Naive thymus-derived CD4-positive, alpha-beta T cell (primary cell): ENCODE measurements at regions of chr10 and their contacts with region 1.

Region 1: GRCh38 chr10:129030996-129031843 is 435.8 kb upstream of the MGMT start:
- DNase-seq: peak; percentile 30 to 64 (median 56)
- ATAC-seq: peak; percentile 72
- H3K4me3 ChIP-seq: no peak overlapping the region
- H3K4me3 Mint-ChIP-seq: peak overlapping the region in 6 of 10 donors; percentile 46 to 74 (median 61)
- H3K27ac ChIP-seq: no peak overlapping the region
- H3K27ac Mint-ChIP-seq: peak overlapping the region in 3 of 9 donors; percentile 1 to 58 (median 13)
- H3K4me1 ChIP-seq: peaks cover 5 to 23% of the 10 kb centered on the region in 2 donors
- H3K4me1 Mint-ChIP-seq: peaks cover 11 to 48% (median 39%) of the 10 kb centered on the region in 7 donors
- H3K27me3 ChIP-seq: no peaks in the 10 kb centered on the region
- H3K27me3 Mint-ChIP-seq: peaks cover 15 to 44% (median 24%) of the 10 kb centered on the region in 5 donors

Region 2: DNA sequence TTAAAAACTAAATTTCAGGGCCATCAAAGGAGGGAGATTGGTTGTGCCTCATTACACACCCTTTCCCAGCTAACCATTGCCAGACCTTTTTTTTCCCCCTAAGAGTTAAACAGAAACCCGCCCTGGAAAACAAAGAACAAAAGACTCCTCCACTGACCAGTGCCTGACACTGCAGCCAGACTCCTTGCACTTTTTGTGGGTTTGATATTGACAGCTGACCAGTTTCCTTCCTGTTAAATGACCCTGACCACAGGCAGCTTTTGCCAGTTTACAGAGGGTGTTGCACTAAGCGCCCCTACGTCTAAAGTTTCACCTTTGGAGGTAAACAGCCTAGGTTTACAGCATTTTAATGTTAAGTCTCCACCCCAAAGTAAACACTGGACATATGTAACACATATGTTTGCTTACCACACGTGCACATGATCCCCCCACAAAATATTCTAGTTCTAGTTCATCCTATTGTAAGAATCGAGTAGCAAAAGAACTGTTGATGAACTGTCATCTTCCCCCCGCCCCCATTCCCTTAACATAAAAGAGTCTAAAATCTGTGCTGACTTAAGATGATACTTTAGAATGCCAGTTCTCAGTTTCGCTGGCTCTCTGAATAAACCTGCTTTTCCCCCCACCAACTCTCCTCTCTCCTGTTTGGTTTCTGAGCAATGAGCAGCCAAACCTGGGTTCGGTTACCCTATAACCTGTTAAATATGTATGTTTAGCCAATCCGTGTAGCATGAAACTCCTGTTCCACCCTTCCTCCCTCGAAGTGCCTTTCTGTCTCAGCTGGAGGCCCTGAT is 1256.3 kb before region 1 on chr10:
- CTCF ChIA-PET with region 1: no interaction called
- POLR2A ChIA-PET with region 1: no interaction called
- intact Hi-C with region 1: no loop called
- DNase-seq: no peak
- ATAC-seq: no peak
- H3K4me3 ChIP-seq: no peak overlapping the region
- H3K4me3 Mint-ChIP-seq: no peak overlapping the region
- H3K27ac ChIP-seq: no peak overlapping the region
- H3K27ac Mint-ChIP-seq: no peak overlapping the region
- H3K4me1 ChIP-seq: no peaks in the 10 kb centered on the region
- H3K4me1 Mint-ChIP-seq: no peaks in the 10 kb centered on the region
- H3K27me3 ChIP-seq: no peaks in the 10 kb centered on the region
- H3K27me3 Mint-ChIP-seq: peaks cover 0 to 11% (median 4%) of the 10 kb centered on the region in 5 donors

Region 3: GRCh38 chr10:129074939-129075338 is 43.7 kb after region 1 on chr10:
- CTCF ChIA-PET with region 1: interaction called, 3 read pairs
- POLR2A ChIA-PET with region 1: no interaction called
- intact Hi-C with region 1: loop called in 1 of 2 experiments (anchors 5 kb)
- DNase-seq: no peak
- ATAC-seq: no peak
- H3K4me3 ChIP-seq: no peak overlapping the region
- H3K4me3 Mint-ChIP-seq: no peak overlapping the region
- H3K27ac ChIP-seq: no peak overlapping the region
- H3K27ac Mint-ChIP-seq: no peak overlapping the region
- H3K4me1 ChIP-seq: peaks cover 0 to 7% of the 10 kb centered on the region in 2 donors
- H3K4me1 Mint-ChIP-seq: peaks cover 0 to 24% (median 13%) of the 10 kb centered on the region in 7 donors
- H3K27me3 ChIP-seq: no peaks in the 10 kb centered on the region
- H3K27me3 Mint-ChIP-seq: no peaks in the 10 kb centered on the region

Region 4: GRCh38 chr10:129161150-129161549 is 129.9 kb after region 1 on chr10:
- CTCF ChIA-PET with region 1: no interaction called
- POLR2A ChIA-PET with region 1: no interaction called
- intact Hi-C with region 1: loop called in 1 of 2 experiments (anchors 5 kb)
- DNase-seq: no peak
- ATAC-seq: no peak
- H3K4me3 ChIP-seq: no peak overlapping the region
- H3K4me3 Mint-ChIP-seq: no peak overlapping the region
- H3K27ac ChIP-seq: no peak overlapping the region
- H3K27ac Mint-ChIP-seq: no peak overlapping the region
- H3K4me1 ChIP-seq: no peaks in the 10 kb centered on the region
- H3K4me1 Mint-ChIP-seq: peaks cover 0 to 7% (median 0%) of the 10 kb centered on the region in 7 donors
- H3K27me3 ChIP-seq: no peaks in the 10 kb centered on the region
- H3K27me3 Mint-ChIP-seq: peaks cover 0 to 11% (median 4%) of the 10 kb centered on the region in 5 donors

Region 5: GRCh38 chr10:129888784-129889616 is 857.8 kb after region 1 on chr10:
- CTCF ChIA-PET with region 1: no interaction called
- POLR2A ChIA-PET with region 1: no interaction called
- intact Hi-C with region 1: loop called in 1 of 2 experiments (anchors 2 kb)
- DNase-seq: peak in 8 of 9 donors; percentile 4 to 34 (median 16)
- ATAC-seq: peak; percentile 50
- H3K4me3 ChIP-seq: no peak overlapping the region
- H3K4me3 Mint-ChIP-seq: no peak overlapping the region
- H3K27ac ChIP-seq: no peak overlapping the region
- H3K27ac Mint-ChIP-seq: no peak overlapping the region
- H3K4me1 ChIP-seq: no peaks in the 10 kb centered on the region
- H3K4me1 Mint-ChIP-seq: no peaks in the 10 kb centered on the region
- H3K27me3 ChIP-seq: no peaks in the 10 kb centered on the region
- H3K27me3 Mint-ChIP-seq: peaks cover 0 to 3% (median 0%) of the 10 kb centered on the region in 5 donors

Region 6: GRCh38 chr10:130110246-130111112 is 1079.3 kb after region 1 on chr10 and contains the start of gene C10orf143:
- CTCF ChIA-PET with region 1: interaction called, 5 read pairs
- POLR2A ChIA-PET with region 1: interaction called, 21 read pairs
- intact Hi-C with region 1: loop called in 1 of 2 experiments (anchors 1 kb)
- DNase-seq: peak; percentile 96 to 100 (median 99)
- ATAC-seq: peak; percentile 89
- H3K4me3 ChIP-seq: peak within 1 kb of the TSS; percentile 100
- H3K4me3 Mint-ChIP-seq: peak within 1 kb of the TSS; percentile 90 to 99 (median 98)
- H3K27ac ChIP-seq: peak within 1 kb of the TSS; percentile 88
- H3K27ac Mint-ChIP-seq: peak within 1 kb of the TSS; percentile 90 to 99 (median 98)
- H3K4me1 ChIP-seq: peaks cover 19 to 21% of the 10 kb centered on the region in 2 donors
- H3K4me1 Mint-ChIP-seq: peaks cover 27 to 67% (median 53%) of the 10 kb centered on the region in 7 donors
- H3K27me3 ChIP-seq: no peaks in the 10 kb centered on the region
- H3K27me3 Mint-ChIP-seq: no peaks in the 10 kb centered on the region
- total RNA-seq, gene C10orf143: 2.6 to 12.5 (median 10.2) TPM

Region 7: GRCh38 chr10:130301021-130301892 is 1270.0 kb after region 1 on chr10:
- CTCF ChIA-PET with region 1: no interaction called
- POLR2A ChIA-PET with region 1: no interaction called
- intact Hi-C with region 1: loop called in 1 of 2 experiments (anchors 5 kb)
- DNase-seq: peak; percentile 8 to 81 (median 58)
- ATAC-seq: peak; percentile 78
- H3K4me3 ChIP-seq: peak overlapping the region; percentile 44
- H3K4me3 Mint-ChIP-seq: peak overlapping the region in 9 of 10 donors; percentile 31 to 94 (median 78)
- H3K27ac ChIP-seq: peak overlapping the region; percentile 61
- H3K27ac Mint-ChIP-seq: peak overlapping the region; percentile 13 to 96 (median 76)
- H3K4me1 ChIP-seq: peaks cover 0 to 4% of the 10 kb centered on the region in 2 donors
- H3K4me1 Mint-ChIP-seq: peaks cover 0 to 23% (median 12%) of the 10 kb centered on the region in 7 donors
- H3K27me3 ChIP-seq: no peaks in the 10 kb centered on the region
- H3K27me3 Mint-ChIP-seq: peaks cover 0 to 5% (median 0%) of the 10 kb centered on the region in 5 donors